ENCODE measurements at regions of chr2 and their contacts with region 1.

Region 1: GRCh38 chr2:112254466-112255239 is at the start of gene ZC3H8:
- H3K4me3 Mint-ChIP-seq: peak within 1 kb of the TSS; percentile 82
- H3K27ac Mint-ChIP-seq: peak within 1 kb of the TSS; percentile 91
- H3K4me1 Mint-ChIP-seq: peaks cover 37% of the 10 kb centered on the region
- H3K27me3 Mint-ChIP-seq: no peaks in the 10 kb centered on the region

Region 2: DNA sequence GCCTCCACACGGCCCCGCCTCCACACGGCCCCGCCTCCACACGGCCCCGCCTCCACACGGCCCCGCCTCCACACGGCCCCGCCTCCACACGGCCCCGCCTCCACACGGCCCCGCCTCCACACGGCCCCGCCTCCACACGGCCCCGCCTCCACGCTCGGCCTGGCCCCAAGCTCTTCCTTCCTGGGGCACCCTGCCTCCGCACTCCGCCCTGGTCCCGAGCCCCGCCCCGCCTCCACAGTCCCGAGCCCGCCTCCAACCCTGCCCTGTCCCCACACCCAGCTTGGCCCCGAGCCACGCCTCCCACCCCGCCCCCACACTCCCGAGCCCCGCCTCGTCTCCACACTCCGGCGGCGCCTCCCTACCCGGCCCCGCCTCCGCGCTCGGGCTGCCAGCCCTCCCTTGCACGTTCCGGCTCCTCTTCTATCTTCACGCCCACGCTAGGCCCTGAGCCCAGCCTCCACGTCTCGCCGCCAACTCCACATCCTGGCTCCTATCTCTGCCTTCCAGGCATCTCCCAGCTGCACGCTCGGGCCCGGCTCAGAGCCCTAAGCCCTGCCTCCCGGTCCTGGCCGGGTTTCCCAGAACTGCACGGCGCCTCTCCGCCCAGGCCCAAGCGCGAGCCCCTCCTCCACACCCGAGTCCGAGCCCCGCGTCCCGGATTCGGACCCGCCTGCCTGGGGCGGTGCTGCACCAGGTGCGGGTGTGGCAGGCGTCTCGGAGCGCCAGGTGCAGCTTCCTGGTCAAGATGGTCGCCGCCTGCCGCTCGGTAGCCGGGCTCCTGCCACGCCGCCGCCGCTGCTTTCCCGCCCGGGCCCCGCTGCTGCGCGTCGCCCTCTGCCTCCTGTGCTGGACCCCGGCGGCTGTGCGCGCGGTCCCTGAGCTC is 199.6 kb before region 1 on chr2 and contains the start of gene TMEM87B:
- intact Hi-C with region 1: loop called (anchors 10 kb)
- H3K4me3 Mint-ChIP-seq: peak within 1 kb of the TSS; percentile 97
- H3K27ac Mint-ChIP-seq: peak within 1 kb of the TSS; percentile 94
- H3K4me1 Mint-ChIP-seq: peaks cover 31% of the 10 kb centered on the region
- H3K27me3 Mint-ChIP-seq: no peaks in the 10 kb centered on the region

Region 3: GRCh38 chr2:112275306-112275886 is 20.7 kb after region 1 on chr2 and contains the start of gene ZC3H6:
- intact Hi-C with region 1: loop called (anchors 2 kb)
- H3K4me3 Mint-ChIP-seq: peak within 1 kb of the TSS; percentile 85
- H3K27ac Mint-ChIP-seq: peak within 1 kb of the TSS; percentile 97
- H3K4me1 Mint-ChIP-seq: no peaks in the 10 kb centered on the region
- H3K27me3 Mint-ChIP-seq: no peaks in the 10 kb centered on the region

Region 4: DNA sequence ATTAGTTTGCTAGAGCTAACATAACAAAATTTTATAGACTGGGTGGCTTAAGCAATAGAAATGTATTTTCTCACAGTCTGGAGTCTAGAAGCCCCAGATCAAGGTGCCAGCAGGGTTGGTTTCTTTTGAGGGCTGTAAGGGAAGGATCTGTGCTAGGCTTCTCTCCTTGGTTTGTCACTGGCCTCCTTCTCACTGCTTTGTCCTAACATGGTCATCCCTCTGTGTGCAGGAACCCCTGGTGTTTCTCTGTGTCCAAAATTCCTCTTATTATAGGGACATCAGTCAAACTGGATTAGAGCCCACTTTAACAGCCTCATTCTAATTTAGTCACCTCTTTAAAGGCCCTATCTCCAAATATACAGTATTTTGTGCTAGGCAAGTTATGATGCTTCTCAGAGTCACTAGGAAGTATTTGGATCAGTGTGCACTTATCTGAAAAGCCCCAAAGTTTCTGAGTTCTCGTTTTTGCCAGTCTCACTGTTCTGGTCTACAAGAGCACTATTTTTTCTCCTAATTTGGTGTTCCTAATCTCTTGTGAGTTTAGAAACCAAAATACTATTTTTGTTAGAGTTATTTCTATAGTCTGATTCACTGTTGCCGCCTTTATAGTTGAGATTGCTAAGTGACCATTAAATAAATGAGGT is 49.8 kb after region 1 on chr2:
- intact Hi-C with region 1: no loop called
- H3K4me3 Mint-ChIP-seq: no peak overlapping the region
- H3K27ac Mint-ChIP-seq: no peak overlapping the region
- H3K4me1 Mint-ChIP-seq: no peaks in the 10 kb centered on the region
- H3K27me3 Mint-ChIP-seq: no peaks in the 10 kb centered on the region